IMR-90 (cell line): ENCODE measurements at regions of chr11 and their contacts with region 1.

Region 1: GRCh38 chr11:131534611-131535010 is 164.2 kb downstream of the NTM start:
- DNase-seq: no peak
- ATAC-seq: no peak
- H3K4me3 ChIP-seq: no peak overlapping the region
- H3K27ac ChIP-seq: no peak overlapping the region
- H3K4me1 ChIP-seq: no peaks in the 10 kb centered on the region
- H3K27me3 ChIP-seq: peaks cover 2% of the 10 kb centered on the region
- CTCF ChIP-seq: no peak
- POLR2A ChIP-seq: no peak
- RAD21 ChIP-seq: no peak

Region 2: DNA sequence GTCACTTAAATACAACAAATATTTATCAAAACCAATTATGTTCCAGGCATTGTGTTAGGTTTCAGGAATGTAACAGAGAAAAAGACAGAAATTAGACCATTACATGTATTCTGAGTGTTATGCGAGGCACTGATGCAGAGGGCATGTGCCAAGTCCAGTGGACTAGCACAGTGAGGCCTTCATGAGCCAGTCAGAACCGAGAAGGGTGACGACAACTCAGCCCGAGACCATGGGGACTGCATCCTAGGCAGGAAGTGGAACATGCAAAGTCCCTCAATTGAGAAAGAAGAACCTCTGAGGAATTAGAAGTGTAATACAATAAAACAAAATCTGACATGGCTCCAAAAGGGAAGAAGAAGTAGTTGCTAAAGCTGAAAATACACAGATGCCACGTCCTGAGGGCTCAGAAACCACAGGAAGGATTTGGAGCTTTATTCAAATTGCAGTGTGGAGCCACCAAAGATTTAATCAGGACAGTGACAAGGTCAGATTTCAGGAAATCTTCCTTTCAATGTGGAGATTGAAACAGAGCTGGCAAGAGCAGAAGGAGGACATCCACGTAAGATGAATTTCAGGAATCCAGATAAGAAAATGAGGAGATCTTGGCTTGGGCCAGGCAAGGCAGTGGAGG is 365.5 kb after region 1 on chr11:
- CTCF ChIA-PET with region 1: no interaction called
- POLR2A ChIA-PET with region 1: no interaction called
- dilution Hi-C with region 1: no loop called
- in situ Hi-C with region 1: no loop called
- intact Hi-C with region 1: no loop called
- DNase-seq: no peak
- ATAC-seq: no peak
- H3K4me3 ChIP-seq: no peak overlapping the region
- H3K27ac ChIP-seq: no peak overlapping the region
- H3K4me1 ChIP-seq: peaks cover 15% of the 10 kb centered on the region
- H3K27me3 ChIP-seq: no peaks in the 10 kb centered on the region
- CTCF ChIP-seq: no peak
- POLR2A ChIP-seq: no peak
- RAD21 ChIP-seq: no peak

Region 3: GRCh38 chr11:133269267-133269666 is 1734.7 kb after region 1 on chr11:
- CTCF ChIA-PET with region 1: no interaction called
- POLR2A ChIA-PET with region 1: no interaction called
- dilution Hi-C with region 1: no loop called
- in situ Hi-C with region 1: no loop called
- intact Hi-C with region 1: loop called (anchors 10 kb)
- DNase-seq: no peak
- ATAC-seq: no peak
- H3K4me3 ChIP-seq: no peak overlapping the region
- H3K27ac ChIP-seq: no peak overlapping the region
- H3K4me1 ChIP-seq: no peaks in the 10 kb centered on the region
- H3K27me3 ChIP-seq: no peaks in the 10 kb centered on the region
- CTCF ChIP-seq: no peak
- POLR2A ChIP-seq: no peak
- RAD21 ChIP-seq: no peak